Dorsolateral prefrontal cortex (tissue), 120 donors: ENCODE measurements at regions of chr15 and their contacts with region 1.

Region 1: GRCh38 chr15:77543159-77543882 is 89.4 kb downstream of the LINGO1 start:
- DNase-seq: peak; percentile 78 to 90 (median 84)
- H3K4me3 ChIP-seq: peak overlapping the region in 58 of 59 donors; percentile 24 to 68 (median 52)
- H3K27ac ChIP-seq: peak overlapping the region; percentile 42 to 98 (median 91)
- H3K27me3 ChIP-seq: no peaks in the 10 kb centered on the region
- CTCF ChIP-seq: peak; percentile 90 to 100 (median 99)

Region 2: DNA sequence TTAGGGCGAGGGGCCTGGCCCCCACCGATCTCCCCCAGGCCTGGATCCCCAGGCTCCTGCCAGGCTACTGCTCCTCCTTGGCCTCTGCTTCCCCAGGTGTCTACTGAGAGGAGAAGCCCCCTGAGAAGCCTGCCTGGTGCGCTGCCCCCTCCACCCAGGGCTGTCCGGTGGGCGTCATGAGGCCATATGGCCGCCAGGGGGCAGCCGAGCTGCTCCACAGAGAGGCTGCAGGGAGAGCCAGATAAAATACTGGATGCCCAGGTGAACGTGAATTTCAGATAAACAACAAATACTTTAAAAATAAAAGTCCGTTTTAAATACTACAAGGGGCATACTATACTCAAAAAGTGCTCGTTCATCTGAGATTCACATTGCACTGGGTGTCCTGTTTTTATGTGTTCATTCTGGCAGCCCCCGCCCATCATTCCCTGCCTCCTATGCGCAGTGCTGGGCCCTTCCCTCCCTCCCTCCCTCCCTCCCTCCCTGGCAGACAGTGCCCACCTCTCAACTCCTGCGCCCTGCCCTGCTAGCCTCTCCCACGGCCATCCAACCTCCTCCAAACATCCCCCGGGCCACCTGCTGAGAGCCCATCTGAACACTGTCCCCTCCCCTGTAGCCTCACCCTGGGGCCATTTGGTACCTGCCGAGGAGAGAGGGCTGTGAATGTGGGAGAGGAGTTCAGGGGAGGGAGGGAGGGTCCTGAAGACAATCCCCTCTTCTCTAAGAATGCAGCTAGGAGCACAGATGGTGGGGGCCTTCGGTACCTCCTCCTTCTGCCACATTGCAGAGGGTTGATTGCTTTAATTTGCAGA is 518.8 kb before region 1 on chr15:
- intact Hi-C with region 1: loop called in 1 of 2 experiments (anchors 5 kb)
- DNase-seq: peak; percentile 58 to 81 (median 68)
- H3K4me3 ChIP-seq: peak overlapping the region in 3 of 59 donors; percentile 4 to 26 (median 24)
- H3K27ac ChIP-seq: no peak overlapping the region
- H3K27me3 ChIP-seq: no peaks in the 10 kb centered on the region
- CTCF ChIP-seq: peak; percentile 55 to 99 (median 94)

Region 3: DNA sequence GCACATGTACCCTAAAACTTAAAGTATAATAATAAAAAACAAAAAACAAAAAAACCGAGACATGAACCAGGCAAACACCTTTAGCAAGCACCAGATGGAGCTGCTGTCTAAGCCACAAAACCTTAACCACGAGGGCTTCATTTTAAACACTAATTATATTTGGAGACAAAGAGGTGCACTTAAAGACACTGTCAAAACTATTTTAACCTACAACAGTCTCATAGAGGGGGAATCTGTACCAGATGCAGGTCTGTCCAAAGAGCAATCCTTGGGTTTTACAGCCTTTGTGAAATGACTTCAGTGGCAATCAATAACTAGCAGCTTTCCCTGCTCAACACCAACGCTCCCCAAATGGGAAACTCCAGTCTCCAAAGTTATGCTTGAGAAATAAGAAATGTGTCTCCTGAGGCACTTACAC is 356.7 kb before region 1 on chr15:
- intact Hi-C with region 1: loop called (anchors 2 to 5 kb)
- DNase-seq: no peak
- H3K4me3 ChIP-seq: no peak overlapping the region
- H3K27ac ChIP-seq: peak overlapping the region in 44 of 59 donors; percentile 32 to 85 (median 68)
- H3K27me3 ChIP-seq: no peaks in the 10 kb centered on the region
- CTCF ChIP-seq: peak; percentile 39 to 79 (median 65)

Region 4: GRCh38 chr15:77430213-77430612 is 113.1 kb before region 1 on chr15:
- intact Hi-C with region 1: no loop called
- DNase-seq: no peak
- H3K4me3 ChIP-seq: no peak overlapping the region
- H3K27ac ChIP-seq: no peak overlapping the region
- H3K27me3 ChIP-seq: no peaks in the 10 kb centered on the region
- CTCF ChIP-seq: no peak

Region 5: DNA sequence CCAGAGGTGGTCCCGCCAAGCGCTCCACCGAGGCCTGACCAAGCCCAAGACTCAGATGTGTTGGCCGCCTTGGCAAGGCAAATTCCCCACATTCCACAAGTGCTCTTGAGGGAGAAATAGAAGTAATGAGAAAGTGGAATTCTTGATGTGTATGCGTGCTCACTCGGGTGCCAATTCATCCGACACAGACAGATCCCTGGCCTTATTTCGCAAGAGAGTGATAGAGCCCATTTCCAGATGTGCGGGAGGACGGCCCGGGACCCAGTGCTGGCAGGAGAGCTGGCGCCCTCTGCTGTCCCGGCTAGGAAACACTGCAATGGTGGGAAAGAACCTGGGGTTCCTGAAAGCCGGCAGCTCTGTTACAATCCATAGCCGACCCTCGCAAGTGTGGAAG is 46.6 kb before region 1 on chr15:
- intact Hi-C with region 1: loop called (anchors 1 kb)
- DNase-seq: peak; percentile 40 to 84 (median 80)
- H3K4me3 ChIP-seq: peak overlapping the region in 50 of 59 donors; percentile 6 to 60 (median 33)
- H3K27ac ChIP-seq: peak overlapping the region; percentile 88 to 100 (median 99)
- H3K27me3 ChIP-seq: no peaks in the 10 kb centered on the region
- CTCF ChIP-seq: peak; percentile 70 to 96 (median 88)

Region 6: GRCh38 chr15:77589839-77590238 is 46.5 kb after region 1 on chr15:
- intact Hi-C with region 1: no loop called
- DNase-seq: peak in 9 of 10 donors; percentile 59 to 91 (median 80)
- H3K4me3 ChIP-seq: peak overlapping the region in 2 of 59 donors; percentile 3 to 8
- H3K27ac ChIP-seq: peak overlapping the region in 51 of 59 donors; percentile 21 to 94 (median 76)
- H3K27me3 ChIP-seq: no peaks in the 10 kb centered on the region
- CTCF ChIP-seq: peak in 4 of 56 donors; percentile 14 to 24 (median 15)

Region 7: DNA sequence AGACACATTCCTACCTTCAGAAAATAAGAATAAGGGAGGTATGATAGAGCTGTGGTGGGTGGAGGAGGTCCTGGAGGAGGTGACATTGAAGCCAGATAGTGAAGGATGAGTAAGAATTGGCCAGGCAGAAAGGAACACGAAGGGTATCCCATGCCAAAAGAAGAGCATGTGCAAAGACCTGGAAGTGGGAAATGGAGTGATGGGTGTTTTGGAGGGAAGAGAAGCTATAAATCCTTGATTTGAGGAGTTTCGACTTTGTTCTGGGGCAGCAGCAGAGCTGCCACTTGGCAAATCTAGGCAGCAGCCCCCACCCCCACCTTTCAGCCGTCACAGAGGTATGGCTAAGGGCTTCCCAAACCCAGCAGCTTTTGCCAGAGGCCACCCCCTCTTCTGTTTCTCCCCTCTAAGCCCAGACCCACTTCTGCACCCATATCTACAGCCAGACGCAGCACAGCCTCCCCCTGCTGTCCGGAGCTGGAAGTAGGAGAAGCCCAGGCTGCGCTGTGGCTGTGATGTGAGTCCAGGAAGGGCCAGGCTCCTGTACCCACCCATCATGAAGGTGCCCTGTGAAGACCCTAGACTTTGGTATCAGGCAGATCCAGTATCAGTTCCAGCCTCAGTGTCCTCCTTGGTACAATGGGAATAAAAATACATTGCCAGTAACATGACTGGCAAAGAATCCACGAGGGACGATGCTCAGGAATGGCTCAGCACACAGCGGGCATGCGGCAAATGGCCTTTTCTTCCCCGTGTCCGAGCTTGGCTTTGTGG is 278.1 kb after region 1 on chr15:
- intact Hi-C with region 1: loop called in 1 of 2 experiments (anchors 10 kb)
- DNase-seq: peak; percentile 70 to 87 (median 82)
- H3K4me3 ChIP-seq: peak overlapping the region in 27 of 59 donors; percentile 2 to 73 (median 61)
- H3K27ac ChIP-seq: peak overlapping the region in 41 of 59 donors; percentile 2 to 92 (median 64)
- H3K27me3 ChIP-seq: peaks cover 0 to 27% (median 2%) of the 10 kb centered on the region in 45 donors
- CTCF ChIP-seq: peak; percentile 30 to 90 (median 76)